Left colon (tissue), 2 donors: ENCODE measurements at regions of chr22 and their contacts with region 1.

Region 1: DNA sequence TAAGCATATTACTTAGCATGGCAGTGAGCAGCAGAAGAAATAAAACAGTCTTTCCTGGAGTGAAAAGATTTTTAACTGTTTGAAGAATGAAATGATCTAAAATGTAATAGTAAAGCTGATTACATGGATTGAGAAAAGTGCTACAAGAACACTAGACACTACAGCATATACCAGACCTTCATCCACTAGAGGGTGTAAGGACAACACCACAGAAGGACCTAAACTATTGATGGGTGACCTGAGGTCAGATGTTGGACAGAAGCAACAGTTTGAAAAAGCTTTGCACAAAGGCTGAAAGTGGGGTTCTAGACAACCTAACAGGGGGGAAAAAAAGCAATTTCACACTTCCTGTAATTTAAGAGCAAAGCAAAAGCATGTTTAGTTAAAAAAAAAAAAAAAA is 97.7 kb downstream of the RBFOX2 start:
- DNase-seq: no peak
- ATAC-seq: peak; percentile 96

Region 2: GRCh38 chr22:35638410-35638809 is 292.5 kb before region 1 on chr22:
- intact Hi-C with region 1: loop called in 1 of 2 experiments (anchors 5 kb)
- DNase-seq: peak; percentile 53 to 69
- ATAC-seq: no peak

Region 3: GRCh38 chr22:35866651-35867050 is 64.3 kb before region 1 on chr22:
- intact Hi-C with region 1: no loop called
- DNase-seq: no peak
- ATAC-seq: no peak

Region 4: DNA sequence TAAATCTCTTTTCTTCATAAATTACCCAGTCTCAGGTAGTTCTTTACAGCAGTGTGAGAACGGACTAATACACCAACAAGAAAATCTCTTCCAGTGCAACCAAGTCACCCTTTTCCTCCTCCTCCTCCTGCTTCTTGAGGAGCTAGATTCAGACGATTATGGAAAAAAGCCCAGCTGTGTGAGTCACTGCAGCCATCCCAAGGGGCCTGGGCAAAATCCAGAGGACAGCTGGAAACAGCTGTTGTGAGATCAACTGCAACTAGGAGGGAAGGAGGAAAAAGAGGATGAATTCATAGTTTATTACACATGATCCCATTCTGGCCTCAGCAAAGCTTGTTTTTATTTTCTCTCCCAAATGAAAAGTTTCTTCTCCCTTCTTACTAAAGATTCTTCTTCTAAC is 64.8 kb after region 1 on chr22:
- intact Hi-C with region 1: no loop called
- DNase-seq: peak; percentile 35 to 68
- ATAC-seq: no peak

Region 5: DNA sequence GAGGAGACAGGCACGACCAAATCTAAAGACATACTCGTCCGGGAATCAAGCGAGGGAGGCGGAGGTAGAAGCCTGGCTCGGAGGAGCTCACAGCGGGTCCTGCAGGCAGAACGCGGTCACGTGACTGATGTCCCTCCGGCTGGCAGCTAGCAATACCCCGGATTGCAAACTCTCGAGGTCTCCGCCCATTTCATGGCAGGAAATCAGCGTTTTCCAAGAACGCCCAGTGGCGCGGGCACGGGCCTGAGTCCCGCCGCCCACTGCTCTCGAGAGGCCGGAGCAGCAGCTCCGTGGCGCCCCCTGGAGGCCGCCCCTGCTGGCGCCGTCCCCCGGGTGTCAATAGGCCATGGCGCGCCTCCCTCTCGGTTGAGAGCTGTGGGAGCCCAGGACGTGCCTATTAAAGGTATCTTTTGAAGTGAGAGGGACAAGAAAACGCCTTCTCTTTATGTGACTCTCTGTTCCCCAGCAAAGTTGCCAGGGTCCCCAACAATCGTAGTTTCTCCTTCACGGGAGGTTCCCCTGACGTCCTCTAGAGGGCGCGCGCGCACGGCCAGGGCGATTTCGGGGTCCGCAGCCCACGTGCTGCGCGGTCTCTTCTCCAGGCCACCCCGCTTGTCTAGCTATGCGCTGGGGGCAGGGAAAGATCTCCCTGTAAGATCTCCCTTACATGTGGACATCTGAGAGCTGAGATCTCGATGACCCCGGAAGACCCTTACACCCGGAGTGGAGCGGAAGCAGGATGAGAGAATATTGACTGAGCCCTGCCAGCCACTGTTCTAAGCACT is 135.0 kb after region 1 on chr22:
- intact Hi-C with region 1: loop called in 1 of 2 experiments (anchors 5 kb)
- DNase-seq: peak; percentile 86 to 91
- ATAC-seq: peak; percentile 96

Region 6: DNA sequence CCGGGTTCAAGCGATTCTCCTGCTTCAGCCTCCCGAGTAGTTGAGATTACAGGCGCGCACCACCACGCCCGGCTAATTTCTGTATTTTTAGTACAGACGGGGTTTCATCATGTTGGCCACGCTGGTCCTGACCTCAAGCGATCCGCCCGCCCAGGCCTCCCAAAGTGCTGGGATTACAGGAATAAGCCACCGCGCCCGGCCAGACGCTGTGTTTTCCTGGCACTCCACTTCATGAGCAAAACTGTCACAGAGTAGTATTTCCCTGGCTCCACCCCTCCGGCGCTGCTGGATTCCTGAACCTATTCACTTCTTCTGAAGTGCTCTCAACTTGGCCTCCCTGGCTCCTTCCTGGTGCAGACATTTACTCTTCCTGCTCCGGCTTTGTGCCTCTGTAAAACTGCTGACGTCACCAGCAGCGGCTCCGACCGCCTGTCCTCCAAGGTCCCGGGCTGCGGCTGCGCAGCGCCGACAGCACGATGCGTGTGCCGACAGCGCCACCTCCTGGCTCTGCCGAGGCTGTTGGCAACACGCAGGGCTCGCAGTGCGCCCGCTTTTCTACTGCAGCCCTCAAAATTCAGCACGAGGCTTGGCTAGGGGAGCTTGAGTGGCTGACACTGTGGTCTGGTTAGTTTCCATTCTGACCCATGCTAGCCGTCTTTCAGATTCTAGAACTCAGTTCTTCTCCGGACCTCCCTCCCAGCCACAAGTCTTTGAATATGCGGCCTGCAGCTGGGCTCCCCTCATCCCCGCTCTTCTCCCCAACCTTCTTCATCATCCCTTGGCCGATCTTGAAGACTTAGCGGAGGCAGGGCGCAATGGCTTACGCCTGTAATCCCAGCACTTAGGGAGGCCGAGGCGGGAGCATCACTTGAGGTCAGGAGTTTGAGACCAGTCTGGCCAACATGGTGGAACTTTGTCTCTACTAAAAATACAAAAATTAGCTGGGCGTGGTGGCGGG is 193.0 kb after region 1 on chr22:
- intact Hi-C with region 1: loop called in 1 of 2 experiments (anchors 5 kb)
- DNase-seq: peak; percentile 96 to 98
- ATAC-seq: peak; percentile 98